ENCODE measurements at regions of chr9 and their contacts with region 1.

Region 1: DNA sequence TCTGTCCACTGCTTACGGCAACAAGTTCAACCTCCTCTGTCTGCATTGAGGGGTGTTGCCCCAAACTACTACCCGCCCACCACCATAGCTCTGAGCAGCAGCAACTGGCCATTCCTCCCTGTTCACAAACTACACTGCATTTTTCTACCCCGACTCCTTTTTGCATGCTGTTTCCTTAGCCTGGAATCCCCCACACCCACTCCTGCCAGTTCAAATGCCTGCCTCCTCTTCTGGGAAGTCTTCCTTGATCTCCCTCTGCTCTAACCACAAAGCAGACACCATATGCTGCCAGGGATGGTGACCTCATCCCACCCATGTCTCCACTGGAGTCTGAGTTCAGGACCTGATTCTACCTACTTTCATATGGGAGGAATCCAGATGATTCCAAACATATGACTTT is 13.3 kb downstream of the ALDH1B1 start:
- DNase-seq: no peak
- H3K4me3 ChIP-seq: no peak overlapping the region
- CTCF ChIP-seq: no peak

Region 2: GRCh38 chr9:38392235-38393127 is 13.3 kb before region 1 on chr9 and contains the start of gene ALDH1B1:
- CTCF ChIA-PET with region 1: interaction called, 14 read pairs
- POLR2A ChIA-PET with region 1: no interaction called
- DNase-seq: no peak
- H3K4me3 ChIP-seq: peak within 1 kb of the TSS; percentile 90
- CTCF ChIP-seq: peak; percentile 21

Region 3: GRCh38 chr9:38417003-38417945 is 11.5 kb after region 1 on chr9:
- CTCF ChIA-PET with region 1: interaction called, 14 read pairs
- POLR2A ChIA-PET with region 1: no interaction called
- DNase-seq: no peak
- H3K4me3 ChIP-seq: no peak overlapping the region
- CTCF ChIP-seq: peak; percentile 39

Measured in AG04449 (cell line).